Activated CD4-positive, alpha-beta memory T cell treated with anti-CD3 and anti-CD28 coated beads, Interleukin-2, amount 10 ng/mL, durations not matched to agents 7 days and 5 days (primary cell): ENCODE measurements at regions of chr19 and their contacts with region 1.

Region 1: DNA sequence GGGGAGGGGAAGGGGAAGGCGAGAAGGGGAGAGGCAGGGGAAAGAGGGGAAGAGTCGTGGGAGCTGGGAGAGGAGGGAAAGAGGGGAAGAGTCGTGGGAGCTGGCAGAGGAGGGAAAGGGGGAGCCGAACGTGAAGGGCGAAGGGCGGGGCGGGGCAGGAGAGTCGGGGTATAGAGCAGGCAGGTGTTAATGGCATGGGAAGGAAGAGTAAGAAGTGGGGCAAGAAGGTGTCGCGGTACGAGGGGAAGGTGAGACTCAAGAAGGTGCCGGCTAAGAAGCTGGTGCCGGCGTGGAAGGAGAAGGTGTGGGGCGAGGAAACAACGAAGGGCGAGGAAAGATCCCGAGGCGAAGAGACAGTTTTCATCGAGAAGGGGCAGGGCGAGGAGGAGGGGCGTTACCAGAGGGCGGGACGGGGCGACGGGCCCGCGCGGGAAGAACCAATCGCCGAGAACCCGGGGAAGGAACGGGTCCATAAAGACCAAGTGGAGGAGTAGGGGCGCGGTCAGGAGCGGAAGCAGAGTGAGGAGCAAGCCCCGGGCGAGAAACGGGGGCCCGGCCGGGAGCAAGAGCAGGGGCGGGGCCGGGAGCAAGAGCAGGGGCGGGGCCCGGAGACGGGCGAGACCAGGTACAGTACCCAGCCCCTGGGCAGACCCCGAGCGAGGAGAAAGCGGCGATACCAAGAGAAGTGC is 463 bp downstream of the CATSPERG start:
- DNase-seq: peak; percentile 97
- H3K4me3 Mint-ChIP-seq: peak overlapping the region; percentile 82
- H3K27ac Mint-ChIP-seq: peak overlapping the region; percentile 95
- H3K4me1 Mint-ChIP-seq: peaks cover 12% of the 10 kb centered on the region
- H3K27me3 Mint-ChIP-seq: no peaks in the 10 kb centered on the region

Region 2: GRCh38 chr19:38245826-38246498 is 90.1 kb before region 1 on chr19:
- CTCF ChIA-PET with region 1: interaction called, 48 read pairs
- POLR2A ChIA-PET with region 1: interaction called, 11 read pairs
- DNase-seq: no peak
- H3K4me3 Mint-ChIP-seq: no peak overlapping the region
- H3K27ac Mint-ChIP-seq: no peak overlapping the region
- H3K4me1 Mint-ChIP-seq: peaks cover 5% of the 10 kb centered on the region
- H3K27me3 Mint-ChIP-seq: no peaks in the 10 kb centered on the region

Region 3: DNA sequence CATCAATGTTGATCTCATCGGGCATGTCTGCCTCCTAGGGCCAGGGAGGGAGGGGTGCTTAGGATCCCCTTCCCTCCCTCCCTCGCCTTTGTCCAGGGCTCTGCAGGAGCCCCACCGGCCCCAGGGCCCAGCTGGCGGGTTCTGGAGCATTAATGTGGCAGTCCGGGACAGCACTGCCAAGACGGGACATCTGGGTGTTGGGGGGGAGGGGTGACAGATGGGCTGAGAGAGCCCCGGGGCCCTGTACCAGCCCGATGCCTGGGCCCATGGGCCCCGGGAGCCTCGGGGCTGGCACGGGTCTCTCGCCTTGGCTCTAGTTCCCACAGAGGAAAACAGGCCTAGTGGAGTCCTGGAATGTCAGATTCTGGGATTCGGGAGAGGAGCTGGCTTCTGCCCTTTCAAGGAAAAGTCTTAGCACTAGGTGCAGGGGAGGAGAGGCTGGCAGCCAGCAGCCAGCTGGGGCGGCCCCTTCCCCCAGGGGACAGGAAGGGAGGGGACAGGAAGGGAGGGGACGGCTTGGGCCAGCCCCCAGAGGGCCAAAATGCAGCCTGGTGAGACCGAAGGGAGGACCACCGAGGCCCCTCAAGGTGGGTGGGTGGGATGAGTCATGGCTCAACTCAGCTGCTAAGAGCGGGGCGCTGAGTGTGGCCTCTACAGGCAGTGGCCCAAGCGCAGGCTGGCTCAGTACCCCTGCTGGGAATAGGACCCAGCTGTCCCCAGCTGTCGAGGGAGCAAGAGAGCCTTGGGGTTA is 83.0 kb before region 1 on chr19:
- CTCF ChIA-PET with region 1: interaction called, 12 read pairs
- POLR2A ChIA-PET with region 1: no interaction called
- DNase-seq: no peak
- H3K4me3 Mint-ChIP-seq: no peak overlapping the region
- H3K27ac Mint-ChIP-seq: no peak overlapping the region
- H3K4me1 Mint-ChIP-seq: peaks cover 4% of the 10 kb centered on the region
- H3K27me3 Mint-ChIP-seq: peaks cover 15% of the 10 kb centered on the region

Region 4: GRCh38 chr19:38346837-38347236 is 10.7 kb after region 1 on chr19:
- CTCF ChIA-PET with region 1: no interaction called
- POLR2A ChIA-PET with region 1: no interaction called
- DNase-seq: no peak
- H3K4me3 Mint-ChIP-seq: no peak overlapping the region
- H3K27ac Mint-ChIP-seq: no peak overlapping the region
- H3K4me1 Mint-ChIP-seq: no peaks in the 10 kb centered on the region
- H3K27me3 Mint-ChIP-seq: no peaks in the 10 kb centered on the region